Activated naive CD4-positive, alpha-beta T cell treated with anti-CD3 and anti-CD28 coated beads for 36 hours (primary cell): ENCODE measurements at regions of chr11 and their contacts with region 1.

Region 1: DNA sequence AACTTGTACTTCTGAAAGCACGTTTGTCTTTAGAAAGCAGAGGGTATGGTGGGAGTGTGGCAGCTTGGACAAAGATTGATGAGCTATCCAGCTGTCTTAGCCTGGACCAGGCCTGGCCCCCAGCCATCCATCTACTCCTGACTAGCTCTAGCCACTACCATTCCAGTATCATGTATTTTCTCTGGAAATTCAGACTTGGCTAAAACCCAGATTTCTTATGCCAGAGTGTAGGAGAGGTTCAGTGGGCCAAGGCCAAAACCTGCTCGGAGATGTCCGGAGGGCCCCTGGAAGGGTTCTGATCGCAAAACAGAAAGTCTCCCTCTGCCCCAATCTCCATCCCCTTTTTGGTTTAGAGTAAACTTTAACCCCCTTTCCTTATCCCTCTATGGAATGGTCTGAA is 24.8 kb upstream of the MTCH2 start:
- DNase-seq: no peak
- H3K4me3 Mint-ChIP-seq: no peak overlapping the region
- H3K27ac Mint-ChIP-seq: no peak overlapping the region
- H3K4me1 Mint-ChIP-seq: peaks cover 24% of the 10 kb centered on the region
- H3K27me3 Mint-ChIP-seq: no peaks in the 10 kb centered on the region

Region 2: DNA sequence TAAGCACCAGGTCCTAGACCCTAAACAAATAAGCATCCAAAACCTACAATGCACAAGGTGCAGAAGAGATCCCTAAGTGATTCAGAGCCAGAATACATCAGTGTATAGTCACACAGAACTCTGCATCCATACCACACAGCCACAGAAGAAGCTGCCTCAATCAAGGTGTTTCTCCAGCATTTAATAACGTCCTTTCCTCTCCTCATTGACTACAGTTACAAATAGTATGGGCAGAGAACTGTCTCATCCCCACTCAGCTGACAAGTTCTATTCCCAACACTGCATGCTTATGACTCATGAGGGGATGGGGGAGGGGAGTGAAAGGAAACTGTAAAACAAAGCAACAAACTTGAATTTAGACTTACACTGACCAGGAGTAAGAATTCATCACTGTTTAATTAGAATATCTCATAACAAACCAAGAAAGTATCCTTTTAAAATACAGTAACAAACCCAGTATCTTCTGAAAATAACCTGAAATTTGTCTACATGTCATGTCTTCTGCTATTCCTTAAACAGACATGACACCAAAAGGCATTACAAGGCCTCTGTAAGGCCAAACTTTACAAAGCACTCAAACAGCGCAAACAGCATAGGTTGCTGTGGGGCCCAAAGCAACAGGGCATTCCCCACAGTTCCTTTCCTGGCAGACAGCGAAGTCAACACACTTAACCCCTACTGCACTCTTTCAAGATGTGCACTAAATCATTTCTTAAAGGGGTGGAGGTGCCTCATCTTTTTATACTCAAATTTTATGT is 143.5 kb before region 1 on chr11:
- CTCF ChIA-PET with region 1: no interaction called
- intact Hi-C with region 1: loop called (anchors 1 kb)
- DNase-seq: peak; percentile 82
- H3K4me3 Mint-ChIP-seq: peak overlapping the region; percentile 57
- H3K27ac Mint-ChIP-seq: peak overlapping the region; percentile 90
- H3K4me1 Mint-ChIP-seq: peaks cover 79% of the 10 kb centered on the region
- H3K27me3 Mint-ChIP-seq: no peaks in the 10 kb centered on the region

Region 3: GRCh38 chr11:47552566-47553416 is 114.3 kb before region 1 on chr11 and contains the start of gene CELF1:
- CTCF ChIA-PET with region 1: no interaction called
- intact Hi-C with region 1: loop called (anchors 1 kb)
- DNase-seq: peak; percentile 95
- H3K4me3 Mint-ChIP-seq: peak within 1 kb of the TSS; percentile 97
- H3K27ac Mint-ChIP-seq: peak within 1 kb of the TSS; percentile 95
- H3K4me1 Mint-ChIP-seq: peaks cover 42% of the 10 kb centered on the region
- H3K27me3 Mint-ChIP-seq: no peaks in the 10 kb centered on the region
- total RNA-seq, gene CELF1: 104 to 105 TPM

Region 4: GRCh38 chr11:47715082-47715669 is 48.0 kb after region 1 on chr11 and contains the start of gene AGBL2:
- CTCF ChIA-PET with region 1: no interaction called
- intact Hi-C with region 1: loop called (anchors 1 kb)
- DNase-seq: peak; percentile 87
- H3K4me3 Mint-ChIP-seq: peak within 1 kb of the TSS; percentile 91
- H3K27ac Mint-ChIP-seq: peak within 1 kb of the TSS; percentile 94
- H3K4me1 Mint-ChIP-seq: peaks cover 16% of the 10 kb centered on the region
- H3K27me3 Mint-ChIP-seq: no peaks in the 10 kb centered on the region
- total RNA-seq, gene AGBL2: 1.3 to 2.2 TPM

Region 5: DNA sequence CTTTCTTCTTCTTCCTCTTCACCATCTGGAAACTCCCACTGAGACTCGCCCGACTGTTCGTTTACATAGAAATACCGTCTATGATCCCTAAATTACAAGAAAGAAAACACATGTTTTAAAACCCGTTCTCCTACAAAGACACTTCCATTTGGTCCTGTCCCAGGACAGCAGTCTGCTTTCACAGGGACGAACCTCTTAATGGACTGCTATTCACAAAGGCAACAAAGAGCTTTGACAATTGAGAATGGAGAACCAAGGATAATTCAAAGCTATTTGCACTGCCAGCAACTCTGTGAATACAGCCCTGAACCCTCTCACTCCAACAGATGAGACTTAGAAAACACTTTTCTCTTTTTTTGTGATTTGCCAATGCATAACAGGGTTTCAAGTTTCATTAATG is 64.3 kb after region 1 on chr11:
- CTCF ChIA-PET with region 1: no interaction called
- intact Hi-C with region 1: no loop called
- DNase-seq: no peak
- H3K4me3 Mint-ChIP-seq: no peak overlapping the region
- H3K27ac Mint-ChIP-seq: no peak overlapping the region
- H3K4me1 Mint-ChIP-seq: no peaks in the 10 kb centered on the region
- H3K27me3 Mint-ChIP-seq: no peaks in the 10 kb centered on the region

Region 6: GRCh38 chr11:47847892-47848635 is 180.9 kb after region 1 on chr11 and contains the start of gene NUP160:
- CTCF ChIA-PET with region 1: interaction called, 6 read pairs
- intact Hi-C with region 1: loop called (anchors 2 kb)
- DNase-seq: peak; percentile 92
- H3K4me3 Mint-ChIP-seq: peak within 1 kb of the TSS; percentile 93
- H3K27ac Mint-ChIP-seq: peak within 1 kb of the TSS; percentile 92
- H3K4me1 Mint-ChIP-seq: peaks cover 47% of the 10 kb centered on the region
- H3K27me3 Mint-ChIP-seq: no peaks in the 10 kb centered on the region
- total RNA-seq, gene NUP160: 64.7 to 64.8 TPM

Region 7: GRCh38 chr11:48001438-48002021 is 334.4 kb after region 1 on chr11:
- CTCF ChIA-PET with region 1: no interaction called
- intact Hi-C with region 1: loop called (anchors 1 kb)
- DNase-seq: peak; percentile 89
- H3K4me3 Mint-ChIP-seq: peak overlapping the region; percentile 66
- H3K27ac Mint-ChIP-seq: peak overlapping the region; percentile 96
- H3K4me1 Mint-ChIP-seq: peaks cover 88% of the 10 kb centered on the region
- H3K27me3 Mint-ChIP-seq: no peaks in the 10 kb centered on the region

Region 8: GRCh38 chr11:48109046-48109666 is 442.0 kb after region 1 on chr11:
- CTCF ChIA-PET with region 1: no interaction called
- intact Hi-C with region 1: loop called (anchors 1 kb)
- DNase-seq: no peak
- H3K4me3 Mint-ChIP-seq: no peak overlapping the region
- H3K27ac Mint-ChIP-seq: peak overlapping the region; percentile 75
- H3K4me1 Mint-ChIP-seq: peaks cover 46% of the 10 kb centered on the region
- H3K27me3 Mint-ChIP-seq: no peaks in the 10 kb centered on the region